Activated CD4-positive, alpha-beta memory T cell treated with anti-CD3 and anti-CD28 coated beads for 36 hours (primary cell): ENCODE measurements at regions of chr9 and their contacts with region 1.

Region 1: DNA sequence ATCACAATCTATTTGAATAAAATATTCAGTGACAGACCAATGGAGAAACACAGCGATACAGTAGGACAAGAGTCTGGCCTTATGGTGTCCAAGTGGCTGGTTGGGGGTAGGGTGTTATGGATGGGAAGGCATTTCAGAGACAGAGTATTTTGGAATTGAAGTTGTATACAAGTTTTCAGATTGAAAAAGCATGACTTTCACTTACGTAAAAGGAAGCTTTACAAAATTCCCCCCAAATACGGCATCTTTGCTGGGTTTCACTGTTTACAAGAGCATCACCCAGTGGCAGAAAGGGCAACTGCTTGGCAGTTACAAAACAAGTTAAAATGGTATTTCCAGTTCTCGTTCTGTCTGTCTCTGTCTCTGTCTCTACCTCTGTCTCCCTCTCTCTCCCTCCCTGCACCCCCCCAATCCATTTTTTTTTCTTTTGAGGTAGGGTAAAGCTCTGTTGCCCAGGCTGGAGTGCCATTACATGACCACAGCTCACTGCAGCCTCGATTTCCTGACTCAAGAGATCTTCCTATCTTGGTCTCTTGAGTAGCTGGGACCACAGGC is 86.2 kb downstream of the PTPN3 start:
- DNase-seq: peak; percentile 63
- H3K4me3 Mint-ChIP-seq: no peak overlapping the region
- H3K27ac Mint-ChIP-seq: peak overlapping the region; percentile 77
- H3K4me1 Mint-ChIP-seq: peaks cover 36% of the 10 kb centered on the region
- H3K27me3 Mint-ChIP-seq: peaks cover 21% of the 10 kb centered on the region

Region 2: GRCh38 chr9:108885643-108886348 is 526.1 kb before region 1 on chr9:
- CTCF ChIA-PET with region 1: no interaction called
- POLR2A ChIA-PET with region 1: no interaction called
- intact Hi-C with region 1: loop called (anchors 5 kb)
- DNase-seq: peak; percentile 73
- H3K4me3 Mint-ChIP-seq: no peak overlapping the region
- H3K27ac Mint-ChIP-seq: peak overlapping the region; percentile 44
- H3K4me1 Mint-ChIP-seq: peaks cover 17% of the 10 kb centered on the region
- H3K27me3 Mint-ChIP-seq: no peaks in the 10 kb centered on the region

Region 3: GRCh38 chr9:109110326-109111021 is 301.4 kb before region 1 on chr9:
- CTCF ChIA-PET with region 1: no interaction called
- POLR2A ChIA-PET with region 1: no interaction called
- intact Hi-C with region 1: loop called (anchors 2 kb)
- DNase-seq: no peak
- H3K4me3 Mint-ChIP-seq: peak overlapping the region; percentile 20
- H3K27ac Mint-ChIP-seq: peak overlapping the region; percentile 15
- H3K4me1 Mint-ChIP-seq: peaks cover 81% of the 10 kb centered on the region
- H3K27me3 Mint-ChIP-seq: no peaks in the 10 kb centered on the region

Region 4: GRCh38 chr9:109320742-109321448 is 91.0 kb before region 1 on chr9 and contains the start of gene EPB41L4B:
- CTCF ChIA-PET with region 1: no interaction called
- POLR2A ChIA-PET with region 1: no interaction called
- intact Hi-C with region 1: loop called (anchors 2 kb)
- DNase-seq: peak; percentile 93
- H3K4me3 Mint-ChIP-seq: peak within 1 kb of the TSS; percentile 60
- H3K27ac Mint-ChIP-seq: no peak within 1 kb of the TSS
- H3K4me1 Mint-ChIP-seq: peaks cover 8% of the 10 kb centered on the region
- H3K27me3 Mint-ChIP-seq: peaks cover 48% of the 10 kb centered on the region
- total RNA-seq, gene EPB41L4B: 0.17 to 0.21 TPM

Region 5: GRCh38 chr9:109469646-109470358 is 57.9 kb after region 1 on chr9:
- CTCF ChIA-PET with region 1: interaction called, 4 read pairs
- POLR2A ChIA-PET with region 1: no interaction called
- intact Hi-C with region 1: loop called (anchors 2 kb)
- DNase-seq: peak; percentile 82
- H3K4me3 Mint-ChIP-seq: no peak overlapping the region
- H3K27ac Mint-ChIP-seq: no peak overlapping the region
- H3K4me1 Mint-ChIP-seq: no peaks in the 10 kb centered on the region
- H3K27me3 Mint-ChIP-seq: peaks cover 11% of the 10 kb centered on the region

Region 6: DNA sequence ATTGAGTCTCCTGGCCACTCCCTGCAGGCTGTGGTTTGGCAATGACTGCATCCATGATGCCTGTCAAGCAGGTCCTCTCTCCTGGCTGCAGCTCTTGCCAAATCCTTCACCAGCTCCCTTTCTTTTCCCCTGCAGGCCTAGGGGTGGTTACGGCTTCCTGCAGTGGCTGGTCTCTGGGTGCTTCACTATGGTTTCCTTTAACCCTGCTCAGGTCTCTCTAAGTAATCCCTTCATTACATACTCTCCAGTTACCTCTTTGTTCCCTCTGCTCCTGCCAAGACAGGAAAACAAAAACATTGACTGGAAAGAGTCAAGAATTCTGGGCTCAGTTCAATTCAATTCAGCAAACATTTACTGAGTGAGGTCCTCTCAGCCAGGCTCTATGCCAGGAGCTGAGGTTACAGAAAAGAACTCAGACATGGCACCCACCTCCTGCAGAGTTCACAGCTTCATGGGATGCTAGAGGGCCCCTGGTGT is 106.1 kb after region 1 on chr9:
- CTCF ChIA-PET with region 1: no interaction called
- POLR2A ChIA-PET with region 1: no interaction called
- intact Hi-C with region 1: no loop called
- DNase-seq: no peak
- H3K4me3 Mint-ChIP-seq: no peak overlapping the region
- H3K27ac Mint-ChIP-seq: no peak overlapping the region
- H3K4me1 Mint-ChIP-seq: no peaks in the 10 kb centered on the region
- H3K27me3 Mint-ChIP-seq: no peaks in the 10 kb centered on the region

Region 7: GRCh38 chr9:110623462-110624025 is 1211.7 kb after region 1 on chr9:
- CTCF ChIA-PET with region 1: no interaction called
- POLR2A ChIA-PET with region 1: no interaction called
- intact Hi-C with region 1: loop called (anchors 5 kb)
- DNase-seq: no peak
- H3K4me3 Mint-ChIP-seq: no peak overlapping the region
- H3K27ac Mint-ChIP-seq: no peak overlapping the region
- H3K4me1 Mint-ChIP-seq: peaks cover 11% of the 10 kb centered on the region
- H3K27me3 Mint-ChIP-seq: no peaks in the 10 kb centered on the region